ENCODE measurements at regions of chr14 and their contacts with region 1.

Region 1: DNA sequence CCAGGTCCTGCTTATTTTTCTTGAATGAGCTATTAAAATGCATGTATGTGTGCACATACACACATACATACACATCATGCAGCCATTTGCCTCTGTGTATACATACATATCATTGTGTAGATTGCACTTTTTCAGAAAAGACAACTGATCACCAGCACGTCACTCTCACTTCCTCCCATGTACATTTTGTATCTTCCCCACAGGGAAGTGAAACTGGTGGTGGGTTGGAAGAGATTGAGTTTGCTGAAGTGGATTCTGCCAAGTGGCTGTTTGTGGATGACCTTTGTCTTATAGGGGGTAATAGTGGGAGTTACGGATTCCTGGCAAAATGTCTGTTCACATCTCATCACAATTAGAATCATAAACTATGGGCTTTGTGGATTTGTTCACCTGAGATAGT is 448.6 kb downstream of the RAD51B start:
- DNase-seq: no peak
- H3K4me3 ChIP-seq: no peak overlapping the region
- H3K27ac ChIP-seq: peak overlapping the region; percentile 24 to 92 (median 83)
- H3K4me1 ChIP-seq: peaks cover 18 to 91% (median 71%) of the 10 kb centered on the region in 6 donors
- H3K27me3 ChIP-seq: no peaks in the 10 kb centered on the region
- CTCF ChIP-seq: no peak
- POLR2A ChIP-seq: no peak

Region 2: DNA sequence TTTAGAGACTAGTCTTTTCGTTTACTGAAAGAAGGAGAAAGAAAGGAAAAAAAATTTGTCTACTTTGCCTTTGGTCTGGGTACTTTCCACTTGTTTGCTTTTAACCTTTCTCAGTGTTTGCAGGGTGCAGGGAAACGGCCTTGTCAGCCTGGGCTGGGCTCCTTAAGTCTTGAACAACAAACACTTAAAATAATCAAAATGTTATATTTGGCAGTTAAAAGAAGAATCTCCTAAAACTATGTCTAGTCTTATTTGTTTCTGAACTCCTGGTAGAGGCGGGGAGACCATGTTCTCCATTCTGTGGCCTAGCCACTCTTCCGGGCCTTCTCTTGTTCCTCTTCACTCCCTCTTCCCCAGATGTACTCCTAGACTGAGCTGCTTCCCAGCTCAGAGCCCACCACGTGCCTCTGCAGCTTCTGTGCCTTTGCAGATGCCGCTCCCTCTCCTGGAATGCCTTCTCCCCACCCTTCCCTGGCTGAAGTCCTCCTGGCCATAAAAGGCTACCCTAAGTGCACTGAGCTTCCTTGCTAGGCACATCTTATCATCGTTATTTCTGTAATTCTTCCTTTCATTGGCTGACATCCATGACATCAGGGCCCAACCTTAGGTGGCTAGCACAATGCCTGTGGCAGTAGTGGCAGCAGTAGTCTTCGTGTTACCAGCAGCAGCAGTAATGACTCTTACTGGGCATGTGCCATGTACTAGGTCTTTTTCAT is 91.8 kb after region 1 on chr14:
- intact Hi-C with region 1: loop called (anchors 10 kb)
- DNase-seq: no peak
- H3K4me3 ChIP-seq: no peak overlapping the region
- H3K27ac ChIP-seq: peak overlapping the region; percentile 28 to 85 (median 62)
- H3K4me1 ChIP-seq: peaks cover 7 to 76% (median 44%) of the 10 kb centered on the region in 6 donors
- H3K27me3 ChIP-seq: no peaks in the 10 kb centered on the region
- CTCF ChIP-seq: no peak
- POLR2A ChIP-seq: no peak

Region 3: DNA sequence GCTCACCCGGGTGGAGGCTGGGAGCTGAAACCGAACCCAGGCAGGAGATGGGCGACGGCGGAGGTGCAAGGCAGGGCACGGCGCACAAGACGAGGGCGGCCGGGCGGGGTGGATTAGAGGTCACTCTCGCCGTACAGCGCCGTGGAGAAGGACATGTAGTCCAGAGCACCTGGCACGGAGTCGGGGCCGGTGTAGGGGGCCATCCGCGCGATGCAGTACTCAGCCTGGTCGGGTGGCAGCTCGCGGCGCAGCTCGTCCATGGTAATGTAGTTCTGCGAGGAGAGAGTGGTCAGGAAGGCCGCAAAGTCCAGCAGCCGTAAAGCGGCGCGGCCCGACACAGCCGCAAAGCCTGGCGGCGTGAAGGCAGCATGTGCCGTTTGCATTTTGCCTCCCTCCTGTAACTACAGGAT is 606.6 kb after region 1 on chr14:
- intact Hi-C with region 1: no loop called
- DNase-seq: no peak
- H3K4me3 ChIP-seq: peak overlapping the region in 1 of 8 donors; percentile 15
- H3K27ac ChIP-seq: no peak overlapping the region
- H3K4me1 ChIP-seq: no peaks in the 10 kb centered on the region
- H3K27me3 ChIP-seq: no peaks in the 10 kb centered on the region
- CTCF ChIP-seq: no peak
- POLR2A ChIP-seq: no peak

Measured in spleen (tissue), 13 donors.